ENCODE measurements at regions of chr7 and their contacts with region 1.

Region 1: DNA sequence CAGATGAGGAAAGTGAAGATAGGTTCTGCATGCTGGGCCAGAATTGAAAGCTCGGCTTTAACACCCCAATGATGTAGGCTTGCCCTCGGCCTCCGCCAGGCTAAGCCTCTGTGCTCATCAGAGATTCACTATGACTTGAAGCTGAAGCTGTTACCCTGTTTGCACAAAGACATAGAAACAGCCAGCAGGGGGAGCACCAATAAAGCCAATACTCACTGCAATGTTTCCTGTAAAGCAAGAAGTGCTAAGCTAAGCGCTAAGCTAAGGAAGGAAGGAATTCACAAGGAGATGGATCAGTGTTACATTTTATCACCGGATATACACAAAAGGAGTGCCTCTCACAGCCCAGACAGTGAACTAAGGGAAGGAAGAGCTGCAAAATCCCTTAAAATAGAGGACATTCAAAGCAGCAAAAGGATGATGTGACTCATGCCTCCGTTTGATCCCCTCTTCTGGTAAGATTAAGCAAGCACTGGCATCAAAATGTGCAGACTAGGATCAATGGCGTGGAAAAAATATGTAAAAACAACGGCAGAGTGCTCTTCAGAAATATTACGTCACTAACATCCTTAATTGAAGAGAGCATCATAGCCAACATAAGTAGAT is 153.8 kb downstream of the COBL start:
- DNase-seq: peak in 1 of 2 donors; percentile 68
- ATAC-seq: peak; percentile 69
- H3K4me3 ChIP-seq: no peak overlapping the region
- H3K27ac ChIP-seq: no peak overlapping the region
- H3K4me1 ChIP-seq: no peaks in the 10 kb centered on the region
- H3K27me3 ChIP-seq: no peaks in the 10 kb centered on the region

Region 2: DNA sequence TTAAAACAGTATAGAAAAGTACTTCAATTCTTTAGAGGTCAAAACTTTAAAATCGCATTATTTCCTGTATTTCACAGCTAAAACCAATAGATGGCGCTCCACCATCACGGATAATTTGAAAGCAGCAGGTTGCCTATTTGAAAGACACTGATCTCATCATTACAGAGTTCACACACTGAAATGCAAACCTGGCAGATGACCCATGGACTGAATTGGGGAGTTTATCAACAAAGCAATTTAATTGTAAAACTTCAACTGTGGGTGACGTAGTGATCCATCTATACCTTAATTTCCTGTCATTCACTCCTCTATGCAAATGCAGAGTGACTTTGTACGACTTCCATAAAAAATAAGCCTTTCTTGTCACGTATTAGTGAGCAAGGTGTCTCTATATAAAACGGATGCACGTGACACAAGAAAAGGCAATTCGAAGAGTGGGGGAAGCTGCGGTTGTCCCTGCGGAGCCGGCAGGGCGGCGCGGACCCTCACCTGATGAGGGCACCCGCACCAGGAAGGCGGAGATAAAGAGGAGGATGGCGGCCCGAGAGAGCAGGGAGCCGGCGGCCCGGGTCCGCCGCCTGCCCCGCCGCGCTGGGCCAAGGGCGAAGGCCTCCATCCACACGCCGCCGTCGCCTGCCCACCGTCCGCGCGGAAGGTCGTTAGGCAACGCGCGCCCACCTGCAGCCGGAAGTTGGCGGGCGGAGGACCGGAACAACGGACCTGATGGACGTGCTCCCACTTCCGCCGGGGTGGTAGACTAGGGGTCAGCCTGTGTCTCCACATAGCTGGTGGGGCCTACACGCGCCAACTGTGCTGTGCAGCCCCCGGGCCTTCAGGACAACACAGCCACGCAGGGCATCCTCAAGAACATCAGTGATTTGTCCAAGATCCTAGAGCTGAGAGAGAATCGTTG is 1070.0 kb before region 1 on chr7 and contains the start of gene ZPBP:
- intact Hi-C with region 1: loop called in 1 of 2 experiments (anchors 5 kb)
- DNase-seq: no peak
- ATAC-seq: peak; percentile 29
- H3K4me3 ChIP-seq: peak within 1 kb of the TSS in 1 of 2 donors; percentile 29
- H3K27ac ChIP-seq: no peak within 1 kb of the TSS
- H3K4me1 ChIP-seq: no peaks in the 10 kb centered on the region
- H3K27me3 ChIP-seq: no peaks in the 10 kb centered on the region
- total RNA-seq, gene ZPBP: not detected

Region 3: GRCh38 chr7:50142425-50143017 is 1020.3 kb before region 1 on chr7:
- intact Hi-C with region 1: loop called (anchors 5 kb)
- DNase-seq: no peak
- ATAC-seq: no peak
- H3K4me3 ChIP-seq: no peak overlapping the region
- H3K27ac ChIP-seq: no peak overlapping the region
- H3K4me1 ChIP-seq: no peaks in the 10 kb centered on the region
- H3K27me3 ChIP-seq: no peaks in the 10 kb centered on the region

Region 4: GRCh38 chr7:51090411-51090810 is 72.4 kb before region 1 on chr7:
- intact Hi-C with region 1: no loop called
- DNase-seq: no peak
- ATAC-seq: no peak
- H3K4me3 ChIP-seq: no peak overlapping the region
- H3K27ac ChIP-seq: no peak overlapping the region
- H3K4me1 ChIP-seq: no peaks in the 10 kb centered on the region
- H3K27me3 ChIP-seq: no peaks in the 10 kb centered on the region

Region 5: GRCh38 chr7:51366930-51367613 is 204.2 kb after region 1 on chr7:
- intact Hi-C with region 1: loop called in 1 of 2 experiments (anchors 10 kb)
- DNase-seq: no peak
- ATAC-seq: peak; percentile 49
- H3K4me3 ChIP-seq: no peak overlapping the region
- H3K27ac ChIP-seq: no peak overlapping the region
- H3K4me1 ChIP-seq: no peaks in the 10 kb centered on the region
- H3K27me3 ChIP-seq: no peaks in the 10 kb centered on the region

Region 6: DNA sequence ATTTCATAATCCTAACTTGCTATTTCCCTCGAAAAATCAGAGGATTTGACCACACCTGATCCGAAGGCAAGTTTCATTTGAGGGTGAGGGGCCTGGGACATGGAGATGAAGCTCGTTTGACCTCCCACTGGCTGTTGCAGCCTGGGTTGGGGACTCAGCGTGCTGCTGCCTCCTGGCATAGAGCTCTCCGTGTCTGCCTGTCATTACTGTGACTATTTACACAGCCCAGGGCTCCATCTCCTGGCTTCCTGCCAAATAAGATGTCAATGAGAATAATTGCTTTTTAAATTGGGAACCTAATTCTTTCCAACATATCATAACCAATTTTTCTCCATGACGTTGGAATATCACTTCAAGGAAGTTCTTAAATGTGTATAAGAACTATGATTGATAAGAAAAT is 293.1 kb after region 1 on chr7:
- intact Hi-C with region 1: no loop called
- DNase-seq: no peak
- ATAC-seq: no peak
- H3K4me3 ChIP-seq: no peak overlapping the region
- H3K27ac ChIP-seq: no peak overlapping the region
- H3K4me1 ChIP-seq: no peaks in the 10 kb centered on the region
- H3K27me3 ChIP-seq: no peaks in the 10 kb centered on the region

Measured in aorta (tissue), 5 donors.